Activated naive CD4-positive, alpha-beta T cell treated with anti-CD3 and anti-CD28 coated beads for 36 hours (primary cell): ENCODE measurements at regions of chr19 and their contacts with region 1.

Region 1: DNA sequence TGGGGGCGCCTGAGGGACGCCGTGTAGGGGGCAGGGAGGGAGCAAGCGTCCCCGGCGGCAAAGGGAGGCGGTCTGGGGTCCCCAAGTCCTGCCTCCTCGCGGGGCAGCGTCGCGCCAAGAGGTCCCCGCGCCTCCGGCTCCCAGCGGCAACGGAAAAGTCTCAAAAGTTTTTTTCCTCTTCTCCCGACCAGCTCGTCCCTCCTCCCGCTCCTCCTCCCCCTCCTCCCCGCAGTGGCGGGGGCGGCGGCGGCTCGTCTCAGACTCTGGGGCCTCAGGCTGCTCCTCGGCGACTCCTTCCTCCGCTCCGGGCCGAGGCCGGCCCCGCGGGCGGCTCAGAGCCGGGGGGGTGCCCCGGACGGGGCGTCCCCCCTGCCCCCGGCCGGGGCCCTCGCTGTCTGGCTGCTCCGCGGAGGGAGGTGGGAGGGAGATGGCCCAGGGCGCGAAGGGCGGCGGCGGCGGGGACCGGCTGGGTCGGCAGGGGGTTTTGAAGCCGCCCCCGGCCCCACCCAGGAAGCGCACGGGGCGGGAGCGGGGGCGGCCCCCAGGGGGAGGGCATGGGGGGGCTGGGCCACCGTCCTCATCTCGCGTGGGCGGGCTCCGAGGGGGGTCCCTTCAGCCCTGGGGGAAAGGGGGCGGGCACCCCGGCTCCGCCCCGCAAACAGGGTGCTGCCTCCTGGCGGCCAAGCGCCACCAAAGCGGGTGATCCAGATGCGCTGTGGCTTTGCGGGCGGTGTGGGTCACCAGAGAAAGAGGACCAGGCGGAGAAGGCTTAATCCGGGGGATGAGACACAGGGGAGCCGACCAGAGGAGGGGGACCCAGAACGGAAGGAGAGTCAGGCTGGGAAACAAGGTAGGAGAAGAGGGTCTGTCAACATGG is at the start of gene TGFB1:
- DNase-seq: peak; percentile 94
- H3K4me3 Mint-ChIP-seq: peak within 1 kb of the TSS; percentile 91
- H3K27ac Mint-ChIP-seq: peak within 1 kb of the TSS; percentile 97
- H3K4me1 Mint-ChIP-seq: peaks cover 60% of the 10 kb centered on the region
- H3K27me3 Mint-ChIP-seq: no peaks in the 10 kb centered on the region
- total RNA-seq, gene TGFB1: 94.4 to 95.6 TPM

Region 2: DNA sequence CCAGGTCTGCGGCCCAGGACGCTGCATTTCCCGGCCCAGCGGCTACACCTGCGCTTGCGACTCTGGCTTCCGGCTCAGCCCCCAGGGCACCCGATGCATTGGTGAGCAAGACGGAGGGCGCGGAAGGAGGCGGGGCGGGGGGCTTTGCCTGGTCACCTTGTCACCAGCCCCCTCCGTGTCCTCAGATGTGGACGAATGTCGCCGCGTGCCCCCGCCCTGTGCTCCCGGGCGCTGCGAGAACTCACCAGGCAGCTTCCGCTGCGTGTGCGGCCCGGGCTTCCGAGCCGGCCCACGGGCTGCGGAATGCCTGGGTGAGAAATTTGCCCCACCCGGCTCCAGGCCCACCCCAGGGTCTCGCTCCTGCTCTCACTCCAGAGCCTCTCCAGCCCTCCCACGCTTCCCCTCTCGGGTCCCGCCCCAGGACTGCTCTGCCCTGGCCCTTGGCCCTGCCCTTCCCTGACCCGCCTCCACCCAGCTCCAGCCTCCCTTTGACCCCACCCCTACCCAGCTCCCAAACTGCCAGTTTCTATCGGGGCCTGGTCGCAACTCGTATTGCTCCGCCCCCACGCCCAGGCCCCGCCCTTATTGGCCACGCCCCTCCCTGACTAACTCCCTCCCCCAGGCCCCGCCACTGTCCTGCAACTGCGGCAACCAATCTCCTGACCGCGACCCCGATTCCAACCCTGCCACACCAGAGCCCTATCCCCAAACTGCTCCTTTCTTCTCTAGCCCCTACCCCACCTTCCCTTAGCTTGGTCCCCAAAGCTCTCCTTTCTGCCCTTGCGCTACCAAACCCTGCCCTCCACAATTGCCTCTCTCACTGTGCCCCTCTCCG is 743.9 kb before region 1 on chr19:
- CTCF ChIA-PET with region 1: no interaction called
- intact Hi-C with region 1: loop called (anchors 10 kb)
- DNase-seq: peak; percentile 97
- H3K4me3 Mint-ChIP-seq: peak overlapping the region; percentile 89
- H3K27ac Mint-ChIP-seq: peak overlapping the region; percentile 91
- H3K4me1 Mint-ChIP-seq: peaks cover 67% of the 10 kb centered on the region
- H3K27me3 Mint-ChIP-seq: no peaks in the 10 kb centered on the region

Region 3: GRCh38 chr19:41175801-41176777 is 177.6 kb before region 1 on chr19:
- CTCF ChIA-PET with region 1: no interaction called
- intact Hi-C with region 1: no loop called
- DNase-seq: peak; percentile 71
- H3K4me3 Mint-ChIP-seq: peak overlapping the region; percentile 19
- H3K27ac Mint-ChIP-seq: peak overlapping the region; percentile 67
- H3K4me1 Mint-ChIP-seq: peaks cover 13% of the 10 kb centered on the region
- H3K27me3 Mint-ChIP-seq: no peaks in the 10 kb centered on the region

Region 4: DNA sequence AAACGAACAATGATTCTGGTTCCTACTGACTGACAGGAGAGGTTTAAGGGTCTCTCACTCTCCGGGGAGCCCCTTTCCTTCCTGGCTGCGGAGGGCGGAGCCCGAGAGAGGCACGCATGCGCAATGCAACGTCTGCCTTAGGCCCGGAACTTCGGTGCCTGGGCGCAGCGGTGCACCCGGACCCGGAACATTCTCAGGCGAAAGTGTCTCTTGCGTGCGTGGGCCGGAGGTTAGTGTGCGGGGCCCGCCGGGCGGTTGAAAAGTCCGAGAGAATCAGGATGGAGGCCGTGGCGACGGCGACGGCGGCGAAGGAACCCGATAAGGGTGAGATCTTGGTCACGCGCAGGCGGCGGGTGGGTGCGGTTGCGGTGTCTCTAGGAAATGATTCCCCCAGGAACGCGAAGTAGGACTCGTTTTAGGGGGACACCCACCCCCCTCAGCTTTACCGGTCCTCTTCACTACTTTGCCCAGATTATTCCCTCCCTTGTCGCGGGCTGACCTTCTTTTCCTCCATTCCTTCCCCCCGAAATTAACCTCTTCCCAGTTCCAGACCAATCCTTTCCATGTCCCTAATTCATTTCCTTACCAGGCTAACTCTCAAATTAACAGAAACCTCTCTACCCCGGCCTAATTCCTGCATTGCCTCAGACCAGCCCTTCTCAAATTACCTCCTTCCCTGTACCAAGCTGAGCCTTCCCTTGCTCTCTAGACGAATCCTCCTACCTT is 43.5 kb before region 1 on chr19 and contains the start of gene CCDC97:
- CTCF ChIA-PET with region 1: interaction called, 7 read pairs
- intact Hi-C with region 1: loop called (anchors 1 kb)
- DNase-seq: peak; percentile 90
- H3K4me3 Mint-ChIP-seq: peak within 1 kb of the TSS; percentile 95
- H3K27ac Mint-ChIP-seq: peak within 1 kb of the TSS; percentile 96
- H3K4me1 Mint-ChIP-seq: peaks cover 70% of the 10 kb centered on the region
- H3K27me3 Mint-ChIP-seq: no peaks in the 10 kb centered on the region
- total RNA-seq, gene CCDC97: 14.9 to 15.8 TPM

Region 5: DNA sequence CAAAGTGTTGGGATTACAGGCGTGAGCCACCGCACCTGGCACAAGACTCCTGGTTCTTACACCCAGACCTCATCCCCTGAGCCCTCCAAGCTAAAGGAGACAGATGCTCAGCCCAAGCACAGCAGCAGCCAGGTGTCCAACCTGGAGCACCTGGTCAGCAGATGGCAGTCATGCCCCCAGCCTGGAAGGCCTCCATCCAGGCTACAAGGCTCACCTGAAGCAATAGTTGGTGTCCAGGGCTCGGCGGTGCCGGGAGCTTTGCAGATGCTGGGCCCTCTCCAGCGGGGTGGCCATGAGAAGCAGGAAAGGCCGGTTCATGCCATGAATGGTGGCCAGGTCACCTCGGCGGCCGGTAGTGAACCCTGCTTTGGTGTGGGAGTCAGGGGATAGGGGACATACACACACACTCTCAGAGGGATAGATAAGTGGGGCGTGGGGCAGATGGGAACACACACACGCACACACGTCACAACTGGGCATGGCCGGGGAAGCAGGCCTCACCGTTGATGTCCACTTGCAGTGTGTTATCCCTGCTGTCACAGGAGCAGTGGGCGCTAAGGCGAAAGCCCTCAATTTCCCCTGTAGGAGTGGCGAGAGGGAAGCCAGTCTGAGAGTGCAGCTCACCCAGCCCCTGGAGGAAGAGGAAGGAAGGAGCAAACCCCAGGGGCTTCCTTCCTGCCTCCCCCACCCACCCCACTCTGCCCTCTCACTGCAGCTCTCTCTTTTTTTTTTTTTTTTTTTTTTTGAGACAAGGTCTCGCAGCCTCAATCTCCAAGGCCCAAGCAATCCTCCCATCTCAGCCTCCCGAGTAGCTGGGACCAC is 11.8 kb before region 1 on chr19:
- CTCF ChIA-PET with region 1: no interaction called
- intact Hi-C with region 1: no loop called
- DNase-seq: peak; percentile 29
- H3K4me3 Mint-ChIP-seq: no peak overlapping the region
- H3K27ac Mint-ChIP-seq: no peak overlapping the region
- H3K4me1 Mint-ChIP-seq: peaks cover 36% of the 10 kb centered on the region
- H3K27me3 Mint-ChIP-seq: no peaks in the 10 kb centered on the region

Region 6: GRCh38 chr19:41363753-41364523 is 10.2 kb after region 1 on chr19 and contains the start of gene B9D2:
- CTCF ChIA-PET with region 1: interaction called, 19 read pairs
- intact Hi-C with region 1: loop called (anchors 1 kb)
- DNase-seq: peak; percentile 99
- H3K4me3 Mint-ChIP-seq: peak within 1 kb of the TSS; percentile 97
- H3K27ac Mint-ChIP-seq: peak within 1 kb of the TSS; percentile 97
- H3K4me1 Mint-ChIP-seq: peaks cover 30% of the 10 kb centered on the region
- H3K27me3 Mint-ChIP-seq: no peaks in the 10 kb centered on the region
- total RNA-seq, gene B9D2: 3.5 to 4.1 TPM

Region 7: DNA sequence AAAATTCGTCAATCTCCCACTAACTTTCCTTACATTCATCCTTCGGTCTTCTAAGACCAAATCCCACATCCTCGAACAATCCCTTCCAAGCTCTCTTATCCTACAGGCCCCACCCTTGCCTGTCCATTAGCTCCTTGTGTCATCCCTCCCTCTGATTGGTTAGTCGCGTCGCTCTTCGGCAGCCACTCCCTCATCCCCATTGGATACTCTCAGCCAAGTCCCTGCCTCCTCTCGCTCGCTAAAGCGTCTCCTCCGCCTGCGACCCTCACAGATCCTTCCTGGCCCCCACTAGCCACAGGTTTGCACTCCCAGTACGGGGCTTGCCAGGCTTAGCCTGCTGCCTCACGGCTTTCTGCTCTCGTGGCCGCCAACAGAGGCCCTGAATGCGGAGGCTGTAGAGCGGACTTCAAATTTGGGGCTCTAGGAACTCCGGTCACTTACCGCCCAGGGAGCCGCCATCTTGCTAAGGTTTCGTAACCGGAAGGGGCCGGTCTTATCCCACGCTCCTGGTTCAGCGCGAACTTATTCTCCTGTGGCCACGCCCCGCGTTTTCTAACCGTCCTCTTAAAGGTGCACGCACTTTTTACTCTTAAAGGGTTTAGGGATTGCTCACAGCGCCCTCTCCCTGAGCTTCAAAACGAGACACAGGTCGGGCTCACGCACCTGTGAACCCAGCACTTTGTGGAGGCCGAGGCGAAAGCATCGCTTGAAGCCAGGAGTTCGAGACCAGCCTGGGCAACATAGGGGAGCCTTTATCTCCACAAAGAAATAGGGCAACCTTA is 85.9 kb after region 1 on chr19 and contains the start of gene DMAC2:
- CTCF ChIA-PET with region 1: interaction called, 3 read pairs
- intact Hi-C with region 1: loop called (anchors 5 kb)
- DNase-seq: peak; percentile 99
- H3K4me3 Mint-ChIP-seq: no peak within 1 kb of the TSS
- H3K27ac Mint-ChIP-seq: no peak within 1 kb of the TSS
- H3K4me1 Mint-ChIP-seq: peaks cover 13% of the 10 kb centered on the region
- H3K27me3 Mint-ChIP-seq: no peaks in the 10 kb centered on the region
- total RNA-seq, gene DMAC2: 51.5 to 53.8 TPM

Region 8: DNA sequence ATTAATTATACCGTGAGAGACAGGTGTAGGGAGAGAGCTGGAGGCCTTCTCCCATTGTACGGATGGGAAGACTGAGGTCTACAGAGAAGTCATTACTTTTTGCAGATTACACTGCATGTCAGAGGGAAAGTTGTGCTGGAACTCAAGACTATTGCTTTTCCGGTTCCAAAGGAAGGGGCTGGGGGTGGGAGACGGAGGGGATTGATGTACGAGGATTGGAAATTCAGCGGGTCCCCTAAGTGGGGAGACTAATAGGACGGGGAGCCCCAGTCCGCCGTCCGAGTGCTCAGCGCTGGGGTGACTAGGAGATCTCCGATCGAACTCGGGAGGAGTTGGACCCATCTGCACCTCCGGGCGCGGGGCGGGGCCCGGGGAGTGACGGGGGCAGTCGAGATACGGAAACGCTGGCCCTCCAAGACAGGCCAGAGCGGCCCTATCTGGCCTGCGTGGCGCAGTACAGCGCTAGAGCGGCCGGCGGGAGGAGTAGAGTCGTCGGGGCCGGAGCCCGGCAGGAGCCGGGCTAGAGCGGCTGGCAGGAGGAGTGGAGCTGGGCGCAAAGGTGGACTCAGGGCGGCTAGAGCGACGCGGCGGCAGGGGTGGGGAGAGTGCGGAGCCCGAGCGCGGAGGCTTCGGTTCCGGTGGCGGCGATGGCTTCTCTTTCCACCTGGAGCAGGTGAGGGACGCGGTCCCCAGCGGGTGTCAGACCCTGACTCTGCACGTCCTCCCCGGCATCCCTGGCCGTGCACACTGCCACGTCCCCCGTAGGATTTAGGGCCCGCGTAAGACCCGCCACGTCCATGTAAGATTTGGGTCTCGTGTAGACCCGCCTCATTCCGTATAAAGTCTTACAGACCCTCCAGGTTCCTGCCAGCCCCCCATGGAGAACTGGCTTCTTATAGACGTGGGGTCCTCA is 530.4 kb after region 1 on chr19:
- CTCF ChIA-PET with region 1: no interaction called
- intact Hi-C with region 1: loop called (anchors 10 kb)
- DNase-seq: peak; percentile 91
- H3K4me3 Mint-ChIP-seq: peak overlapping the region; percentile 90
- H3K27ac Mint-ChIP-seq: peak overlapping the region; percentile 92
- H3K4me1 Mint-ChIP-seq: peaks cover 54% of the 10 kb centered on the region
- H3K27me3 Mint-ChIP-seq: no peaks in the 10 kb centered on the region